Ascending aorta (tissue), 2 donors: ENCODE measurements at regions of chr11 and their contacts with region 1.

Region 1: GRCh38 chr11:117232092-117232878 is at the start of gene RNF214:
- DNase-seq: peak in 1 of 2 donors; percentile 88
- H3K4me3 ChIP-seq: peak within 1 kb of the TSS; percentile 85 to 89
- H3K27ac ChIP-seq: peak within 1 kb of the TSS; percentile 94 to 95
- H3K4me1 ChIP-seq: peaks cover 11 to 19% of the 10 kb centered on the region in 2 donors
- H3K27me3 ChIP-seq: no peaks in the 10 kb centered on the region
- CTCF ChIP-seq: peak; percentile 63 to 98 (median 77)
- total RNA-seq, gene RNF214: 0.53 TPM

Region 2: DNA sequence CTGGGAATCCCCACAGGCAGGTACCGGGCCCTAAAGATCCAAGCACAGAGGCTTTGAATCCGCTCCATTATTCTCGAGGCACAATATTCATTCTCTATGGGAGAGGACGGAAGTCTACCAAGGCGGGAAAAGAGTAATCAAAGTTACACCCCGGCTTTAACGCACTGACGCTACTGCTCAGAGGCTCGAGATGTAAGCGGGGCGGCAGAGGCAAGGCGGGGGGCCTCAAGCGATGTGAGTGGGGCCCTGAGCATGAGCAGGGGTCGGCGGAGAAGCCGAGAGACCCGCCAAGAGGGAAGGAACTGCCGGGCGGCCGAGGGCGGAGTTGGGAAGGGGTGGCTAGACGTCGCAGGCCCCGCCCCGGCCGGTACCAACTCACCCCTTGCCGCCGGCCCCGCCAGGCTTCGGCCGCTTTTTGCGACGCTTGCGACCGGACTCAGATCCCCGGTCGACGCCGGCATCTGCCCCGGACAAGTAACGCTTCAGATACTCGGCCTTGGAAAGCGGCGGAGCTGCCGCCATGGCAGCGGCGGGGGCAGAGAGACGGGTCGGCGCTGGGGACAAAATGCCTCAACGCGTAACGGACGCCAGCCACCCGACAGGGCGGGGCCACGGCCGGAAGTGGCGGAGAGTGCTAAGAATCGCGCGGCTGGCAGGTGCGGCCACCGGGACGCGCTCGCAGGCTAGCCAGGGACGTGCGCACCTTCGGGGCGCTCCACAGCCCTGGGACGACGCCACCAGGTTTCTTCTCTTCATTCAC is 459.7 kb before region 1 on chr11 and contains the start of gene BUD13:
- intact Hi-C with region 1: loop called (anchors 2 kb)
- DNase-seq: peak; percentile 27 to 91
- H3K4me3 ChIP-seq: peak within 1 kb of the TSS; percentile 71 to 82
- H3K27ac ChIP-seq: peak within 1 kb of the TSS; percentile 88 to 94
- H3K4me1 ChIP-seq: peaks cover 0 to 14% of the 10 kb centered on the region in 2 donors
- H3K27me3 ChIP-seq: no peaks in the 10 kb centered on the region
- CTCF ChIP-seq: peak in 1 of 3 experiments; percentile 15
- total RNA-seq, gene BUD13: 23.9 TPM

Region 3: DNA sequence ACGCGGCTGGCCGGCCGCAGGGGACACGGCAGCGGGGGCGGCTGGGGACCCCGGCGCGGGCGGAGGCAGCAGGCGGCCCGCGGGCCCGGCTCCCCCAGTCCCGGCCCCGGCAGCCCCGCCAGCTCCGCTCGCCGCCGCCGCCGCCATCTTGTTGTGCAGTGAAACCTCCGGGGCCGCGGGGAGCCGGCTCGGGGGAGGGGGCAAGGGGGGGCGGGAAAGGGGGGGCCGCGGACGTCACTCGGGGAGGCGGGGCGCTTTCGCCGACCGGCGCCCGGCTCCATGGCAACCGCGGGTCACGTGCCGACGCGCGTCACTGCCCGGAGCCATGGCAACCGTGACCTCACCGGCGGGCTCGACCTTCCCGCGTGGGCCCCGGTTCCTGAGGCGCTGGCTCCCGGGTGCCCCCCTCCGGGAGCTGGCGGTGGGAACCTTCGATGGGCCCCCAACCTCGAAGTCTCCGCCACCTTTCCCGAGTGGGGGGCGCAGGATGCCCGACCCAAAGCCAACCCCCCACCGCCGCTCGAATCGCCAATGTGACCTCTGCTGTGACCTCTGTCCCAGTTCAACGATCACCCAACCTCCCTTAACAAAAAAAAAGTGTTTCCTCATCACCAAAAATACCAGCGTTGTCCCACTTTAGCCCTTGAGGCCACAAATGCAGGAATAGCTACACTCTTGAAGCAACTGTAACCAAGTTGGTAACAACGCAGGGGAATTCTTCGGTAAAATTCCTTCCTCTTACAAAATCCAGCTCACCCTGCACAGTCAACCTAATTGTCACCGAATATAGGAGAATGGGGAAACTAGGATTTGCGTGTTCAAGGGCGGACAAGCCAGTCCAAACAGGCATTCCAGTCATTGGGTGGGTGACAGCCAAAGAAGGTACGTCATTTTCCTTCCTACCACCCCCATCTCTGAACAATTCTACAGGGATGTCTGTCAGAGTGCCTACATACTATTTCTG is 133.7 kb before region 1 on chr11 and contains the start of gene SIK3:
- intact Hi-C with region 1: loop called (anchors 5 kb)
- DNase-seq: peak; percentile 62 to 96
- H3K4me3 ChIP-seq: peak within 1 kb of the TSS; percentile 99
- H3K27ac ChIP-seq: peak within 1 kb of the TSS; percentile 90 to 99
- H3K4me1 ChIP-seq: peaks cover 4 to 32% of the 10 kb centered on the region in 2 donors
- H3K27me3 ChIP-seq: no peaks in the 10 kb centered on the region
- CTCF ChIP-seq: peak; percentile 29 to 52 (median 49)
- total RNA-seq, gene SIK3: 22.5 TPM

Region 4: DNA sequence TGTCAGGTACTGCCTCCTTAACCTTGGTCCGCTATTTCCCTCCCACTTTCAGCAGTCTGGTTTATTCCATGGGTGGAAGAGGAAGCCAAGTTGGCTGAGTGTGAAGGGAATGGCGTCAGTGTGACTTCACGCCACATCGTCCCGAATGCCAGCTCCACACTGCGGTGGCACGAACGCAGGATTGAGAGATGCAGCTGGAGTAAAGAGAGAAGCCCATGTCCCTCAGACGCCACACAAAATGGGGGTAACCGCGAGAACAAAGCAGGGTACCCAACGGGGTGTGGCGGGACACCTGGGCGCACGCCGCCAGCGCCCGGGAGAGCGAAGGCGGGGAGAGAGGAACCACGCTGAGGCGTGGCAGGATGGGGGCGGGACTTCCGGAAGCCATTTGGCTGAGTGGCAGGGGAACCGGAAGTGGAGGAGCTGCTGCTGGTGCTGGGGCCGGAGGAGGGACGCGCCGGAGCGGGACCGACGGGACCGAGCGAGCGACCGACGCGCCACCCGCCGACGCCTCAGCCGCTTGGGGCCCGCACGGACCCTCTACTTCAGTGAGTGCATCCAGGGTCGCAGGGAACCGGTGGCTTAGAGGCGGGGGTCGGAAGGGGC is 88.3 kb before region 1 on chr11 and contains the start of gene PAFAH1B2:
- intact Hi-C with region 1: loop called (anchors 1 kb)
- DNase-seq: peak; percentile 81 to 97
- H3K4me3 ChIP-seq: peak within 1 kb of the TSS; percentile 92 to 98
- H3K27ac ChIP-seq: peak within 1 kb of the TSS; percentile 91 to 95
- H3K4me1 ChIP-seq: peaks cover 3 to 18% of the 10 kb centered on the region in 2 donors
- H3K27me3 ChIP-seq: no peaks in the 10 kb centered on the region
- CTCF ChIP-seq: no peak
- total RNA-seq, gene PAFAH1B2: 60.7 TPM

Region 5: DNA sequence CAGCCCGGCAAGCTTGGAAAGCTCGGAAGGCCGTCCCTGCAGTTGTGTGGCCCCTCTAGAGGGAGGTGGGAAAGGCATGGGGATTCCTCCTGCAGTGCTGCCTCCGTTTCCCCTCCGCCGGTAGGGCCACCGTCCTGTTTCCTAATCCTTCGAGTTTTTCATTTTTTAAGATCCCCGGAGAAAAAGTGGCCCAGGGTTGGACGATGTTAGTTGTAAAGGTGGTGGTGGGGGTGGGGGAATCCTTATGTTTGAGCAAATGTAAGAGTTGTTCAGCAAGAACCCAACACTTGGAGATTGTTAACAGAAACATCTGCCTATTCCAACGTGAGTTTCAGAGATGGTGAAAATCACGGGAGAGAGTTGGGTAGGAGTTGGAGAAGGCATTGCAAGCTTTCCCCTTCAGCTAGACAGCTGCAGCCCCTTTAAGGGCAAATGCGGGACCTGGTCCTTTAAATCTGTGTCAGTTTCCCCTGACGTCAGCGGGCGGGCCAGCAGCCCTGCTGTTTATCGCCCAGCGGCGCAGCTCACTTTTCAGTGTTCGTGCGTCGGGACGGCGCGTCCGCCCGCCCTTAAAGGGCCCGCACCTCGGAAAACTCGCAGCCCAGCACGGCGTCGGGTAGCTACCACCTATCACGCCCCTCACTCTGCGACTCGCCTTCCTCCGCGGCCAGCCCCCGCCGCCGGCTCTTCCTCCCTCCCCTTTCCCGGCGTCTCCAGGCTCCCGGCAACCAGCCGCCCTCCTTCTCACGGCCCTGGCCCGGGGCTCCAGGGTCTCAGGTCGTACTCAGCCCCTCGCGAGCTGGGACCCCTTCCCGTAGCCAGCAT is 53.9 kb before region 1 on chr11 and contains the start of gene SIDT2:
- intact Hi-C with region 1: loop called (anchors 2 kb)
- DNase-seq: peak; percentile 79 to 97
- H3K4me3 ChIP-seq: peak within 1 kb of the TSS; percentile 84 to 97
- H3K27ac ChIP-seq: peak within 1 kb of the TSS; percentile 98 to 99
- H3K4me1 ChIP-seq: peaks cover 14 to 28% of the 10 kb centered on the region in 2 donors
- H3K27me3 ChIP-seq: no peaks in the 10 kb centered on the region
- CTCF ChIP-seq: peak in 1 of 3 experiments; percentile 7
- total RNA-seq, gene SIDT2: 45.4 TPM

Region 6: GRCh38 chr11:117327567-117328374 is 95.5 kb after region 1 on chr11 and contains the start of gene CEP164:
- intact Hi-C with region 1: loop called (anchors 2 kb)
- DNase-seq: peak; percentile 91 to 98
- H3K4me3 ChIP-seq: peak within 1 kb of the TSS; percentile 82 to 87
- H3K27ac ChIP-seq: peak within 1 kb of the TSS; percentile 88 to 89
- H3K4me1 ChIP-seq: peaks cover 0 to 6% of the 10 kb centered on the region in 2 donors
- H3K27me3 ChIP-seq: no peaks in the 10 kb centered on the region
- CTCF ChIP-seq: no peak
- total RNA-seq, gene CEP164: 15.1 TPM